ENCODE measurements at regions of chr1 and their contacts with region 1.

Region 1: GRCh38 chr1:83998498-83999315 is at the start of gene TTLL7:
- DNase-seq: peak in 1 of 2 donors; percentile 88
- H3K4me3 ChIP-seq: peak within 1 kb of the TSS; percentile 82 to 94
- H3K27ac ChIP-seq: peak within 1 kb of the TSS; percentile 97
- H3K4me1 ChIP-seq: peaks cover 0 to 24% of the 10 kb centered on the region in 2 donors
- H3K27me3 ChIP-seq: no peaks in the 10 kb centered on the region
- CTCF ChIP-seq: no peak
- total RNA-seq, gene TTLL7: 20.5 TPM

Region 2: GRCh38 chr1:83931658-83932253 is 67.0 kb before region 1 on chr1:
- intact Hi-C with region 1: loop called (anchors 5 kb)
- DNase-seq: no peak
- H3K4me3 ChIP-seq: no peak overlapping the region
- H3K27ac ChIP-seq: no peak overlapping the region
- H3K4me1 ChIP-seq: peaks cover 0 to 7% of the 10 kb centered on the region in 2 donors
- H3K27me3 ChIP-seq: no peaks in the 10 kb centered on the region
- CTCF ChIP-seq: peak; percentile 58 to 79 (median 67)

Region 3: GRCh38 chr1:84077476-84078107 is 78.9 kb after region 1 on chr1:
- intact Hi-C with region 1: loop called (anchors 1 kb)
- DNase-seq: peak; percentile 12 to 86
- H3K4me3 ChIP-seq: peak overlapping the region; percentile 90 to 96
- H3K27ac ChIP-seq: peak overlapping the region; percentile 90 to 95
- H3K4me1 ChIP-seq: peaks cover 0 to 6% of the 10 kb centered on the region in 2 donors
- H3K27me3 ChIP-seq: no peaks in the 10 kb centered on the region
- CTCF ChIP-seq: peak in 1 of 3 experiments; percentile 19

Region 4: GRCh38 chr1:84298328-84298683 is 299.6 kb after region 1 on chr1:
- intact Hi-C with region 1: loop called (anchors 10 kb)
- DNase-seq: peak in 1 of 2 donors; percentile 82
- H3K4me3 ChIP-seq: peak overlapping the region; percentile 79 to 89
- H3K27ac ChIP-seq: peak overlapping the region; percentile 84 to 90
- H3K4me1 ChIP-seq: peaks cover 0 to 15% of the 10 kb centered on the region in 2 donors
- H3K27me3 ChIP-seq: no peaks in the 10 kb centered on the region
- CTCF ChIP-seq: no peak

Region 5: GRCh38 chr1:84603941-84604830 is 605.5 kb after region 1 on chr1:
- intact Hi-C with region 1: loop called (anchors 5 kb)
- DNase-seq: peak; percentile 52 to 83
- H3K4me3 ChIP-seq: peak overlapping the region; percentile 49 to 55
- H3K27ac ChIP-seq: peak overlapping the region; percentile 87 to 94
- H3K4me1 ChIP-seq: peaks cover 3 to 11% of the 10 kb centered on the region in 2 donors
- H3K27me3 ChIP-seq: no peaks in the 10 kb centered on the region
- CTCF ChIP-seq: peak; percentile 68 to 81 (median 77)

Region 6: GRCh38 chr1:85276215-85276977 is 1277.7 kb after region 1 on chr1 and contains the start of gene BCL10:
- intact Hi-C with region 1: loop called (anchors 5 kb)
- DNase-seq: peak; percentile 95 to 99
- H3K4me3 ChIP-seq: peak within 1 kb of the TSS; percentile 75 to 82
- H3K27ac ChIP-seq: peak within 1 kb of the TSS; percentile 93 to 97
- H3K4me1 ChIP-seq: peaks cover 8 to 17% of the 10 kb centered on the region in 2 donors
- H3K27me3 ChIP-seq: no peaks in the 10 kb centered on the region
- CTCF ChIP-seq: no peak
- total RNA-seq, gene BCL10: 3.7 TPM

Measured in ascending aorta (tissue), 2 donors.